K562 (cell line): ENCODE measurements at regions of chr11 and their contacts with region 1.

Region 1: DNA sequence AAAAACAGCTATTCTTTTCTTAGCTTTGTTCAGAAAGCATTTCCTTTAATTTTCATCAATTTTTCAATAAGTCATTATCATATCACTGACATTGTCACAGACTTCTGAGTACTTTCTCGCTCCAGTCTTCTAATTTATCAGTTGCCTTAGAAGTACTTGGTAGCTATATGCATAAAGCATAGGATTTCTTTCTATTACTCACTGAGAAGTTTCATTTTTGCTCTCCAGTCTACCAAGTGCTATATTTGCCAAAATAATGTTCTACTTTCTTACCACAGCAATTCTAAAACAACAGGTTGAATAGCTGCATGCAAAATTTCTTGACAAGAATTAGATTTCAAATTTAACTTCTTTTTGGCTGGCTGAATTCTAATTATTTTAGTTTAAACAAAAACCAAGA is 116.3 kb downstream of the STK33 start:
- DNase-seq: no peak
- ATAC-seq: no peak
- H3K4me3 ChIP-seq: no peak overlapping the region
- H3K27ac ChIP-seq: no peak overlapping the region
- H3K4me1 ChIP-seq: no peaks in the 10 kb centered on the region
- H3K27me3 ChIP-seq: no peaks in the 10 kb centered on the region; a peak in 1 of 5 replicates
- CTCF ChIP-seq: no peak
- EP300 ChIP-seq: no peak
- POLR2A ChIP-seq: no peak
- RAD21 ChIP-seq: no peak

Region 2: GRCh38 chr11:8365216-8365941 is 112.3 kb before region 1 on chr11:
- CTCF ChIA-PET with region 1: no interaction called
- POLR2A ChIA-PET with region 1: no interaction called
- in situ Hi-C with region 1: no loop called
- intact Hi-C with region 1: no loop called
- DNase-seq: peak; percentile 23 to 42 (median 38)
- ATAC-seq: peak; percentile 79
- H3K4me3 ChIP-seq: no peak overlapping the region
- H3K27ac ChIP-seq: no peak overlapping the region
- H3K4me1 ChIP-seq: no peaks in the 10 kb centered on the region
- H3K27me3 ChIP-seq: peaks cover 7 to 43% of the 10 kb centered on the region in 2 experiments; a peak in 2 of 5 replicates
- CTCF ChIP-seq: peak; percentile 33 to 54 (median 41)
- EP300 ChIP-seq: no peak
- POLR2A ChIP-seq: no peak
- RAD21 ChIP-seq: no peak

Region 3: GRCh38 chr11:8533332-8533731 is 55.7 kb after region 1 on chr11:
- CTCF ChIA-PET with region 1: no interaction called
- POLR2A ChIA-PET with region 1: no interaction called
- in situ Hi-C with region 1: no loop called
- intact Hi-C with region 1: loop called (anchors 10 kb)
- DNase-seq: no peak
- ATAC-seq: no peak
- H3K4me3 ChIP-seq: no peak overlapping the region
- H3K27ac ChIP-seq: no peak overlapping the region
- H3K4me1 ChIP-seq: no peaks in the 10 kb centered on the region
- H3K27me3 ChIP-seq: no peaks in the 10 kb centered on the region; a peak in 2 of 5 replicates
- CTCF ChIP-seq: no peak
- EP300 ChIP-seq: no peak
- POLR2A ChIP-seq: no peak
- RAD21 ChIP-seq: no peak

Region 4: DNA sequence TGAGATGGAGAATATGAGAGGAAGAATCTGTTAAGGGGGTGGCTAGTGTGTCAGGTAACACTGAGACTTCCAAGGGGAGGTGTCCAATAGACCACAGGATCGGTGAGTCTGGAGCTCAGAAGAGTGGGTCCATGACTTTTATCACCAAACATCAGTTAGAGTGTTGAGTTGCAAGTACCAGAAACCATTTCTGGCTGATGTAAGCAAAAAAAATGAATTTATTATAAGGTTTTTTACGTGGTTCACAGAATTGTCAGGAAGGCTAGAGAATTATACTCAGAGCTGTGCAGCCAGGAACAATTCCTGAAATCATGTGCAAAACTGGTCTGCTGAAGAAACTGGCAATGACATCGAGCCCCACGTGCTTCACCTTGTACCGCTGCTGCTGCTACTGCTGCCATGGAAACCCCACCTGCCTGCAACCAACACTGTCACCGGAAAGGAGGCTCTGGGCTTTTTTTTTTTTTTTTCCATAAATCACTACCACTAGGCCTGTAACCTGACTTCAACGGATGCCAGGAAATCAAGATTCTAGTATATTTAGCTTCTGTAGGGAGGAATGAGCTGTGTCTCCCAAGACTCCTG is 132.9 kb after region 1 on chr11:
- CTCF ChIA-PET with region 1: no interaction called
- POLR2A ChIA-PET with region 1: no interaction called
- in situ Hi-C with region 1: no loop called
- intact Hi-C with region 1: no loop called
- DNase-seq: no peak
- ATAC-seq: 0 out of 3 replicates have a peak, but pooled peaks have one; percentile 25
- H3K4me3 ChIP-seq: no peak overlapping the region
- H3K27ac ChIP-seq: no peak overlapping the region
- H3K4me1 ChIP-seq: no peaks in the 10 kb centered on the region
- H3K27me3 ChIP-seq: 0 out of 5 replicates have a peak, but pooled peaks cover 0 to 3% of the 10 kb centered on the region in 2 experiments
- CTCF ChIP-seq: no peak
- EP300 ChIP-seq: no peak
- POLR2A ChIP-seq: no peak
- RAD21 ChIP-seq: no peak

Region 5: GRCh38 chr11:8638300-8638699 is 160.6 kb after region 1 on chr11:
- CTCF ChIA-PET with region 1: no interaction called
- POLR2A ChIA-PET with region 1: no interaction called
- in situ Hi-C with region 1: no loop called
- intact Hi-C with region 1: no loop called
- DNase-seq: peak; percentile 46 to 58 (median 50)
- ATAC-seq: peak; percentile 79
- H3K4me3 ChIP-seq: no peak overlapping the region
- H3K27ac ChIP-seq: no peak overlapping the region
- H3K4me1 ChIP-seq: peaks cover 2 to 5% of the 10 kb centered on the region in 2 experiments; a peak in 4 of 5 replicates
- H3K27me3 ChIP-seq: no peaks in the 10 kb centered on the region
- CTCF ChIP-seq: no peak
- EP300 ChIP-seq: no peak
- POLR2A ChIP-seq: no peak
- RAD21 ChIP-seq: no peak